Vagina (tissue), 2 donors: ENCODE measurements at regions of chr19 and their contacts with region 1.

Region 1: GRCh38 chr19:19404879-19405860 is at the start of gene GATAD2A:
- DNase-seq: peak in 1 of 2 donors; percentile 94
- H3K4me3 ChIP-seq: peak within 1 kb of the TSS; percentile 87 to 94
- H3K27ac ChIP-seq: peak within 1 kb of the TSS; percentile 83
- H3K4me1 ChIP-seq: peaks cover 59% of the 10 kb centered on the region
- H3K27me3 ChIP-seq: no peaks in the 10 kb centered on the region
- CTCF ChIP-seq: no peak
- POLR2A ChIP-seq: peak in 1 of 2 donors; percentile 50
- total RNA-seq, gene GATAD2A: 49.6 TPM

Region 2: GRCh38 chr19:19444681-19445155 is 39.5 kb after region 1 on chr19:
- intact Hi-C with region 1: loop called (anchors 1 kb)
- DNase-seq: no peak
- H3K4me3 ChIP-seq: no peak overlapping the region
- H3K27ac ChIP-seq: peak overlapping the region; percentile 40
- H3K4me1 ChIP-seq: peaks cover 40% of the 10 kb centered on the region
- H3K27me3 ChIP-seq: no peaks in the 10 kb centered on the region
- CTCF ChIP-seq: no peak
- POLR2A ChIP-seq: no peak

Region 3: DNA sequence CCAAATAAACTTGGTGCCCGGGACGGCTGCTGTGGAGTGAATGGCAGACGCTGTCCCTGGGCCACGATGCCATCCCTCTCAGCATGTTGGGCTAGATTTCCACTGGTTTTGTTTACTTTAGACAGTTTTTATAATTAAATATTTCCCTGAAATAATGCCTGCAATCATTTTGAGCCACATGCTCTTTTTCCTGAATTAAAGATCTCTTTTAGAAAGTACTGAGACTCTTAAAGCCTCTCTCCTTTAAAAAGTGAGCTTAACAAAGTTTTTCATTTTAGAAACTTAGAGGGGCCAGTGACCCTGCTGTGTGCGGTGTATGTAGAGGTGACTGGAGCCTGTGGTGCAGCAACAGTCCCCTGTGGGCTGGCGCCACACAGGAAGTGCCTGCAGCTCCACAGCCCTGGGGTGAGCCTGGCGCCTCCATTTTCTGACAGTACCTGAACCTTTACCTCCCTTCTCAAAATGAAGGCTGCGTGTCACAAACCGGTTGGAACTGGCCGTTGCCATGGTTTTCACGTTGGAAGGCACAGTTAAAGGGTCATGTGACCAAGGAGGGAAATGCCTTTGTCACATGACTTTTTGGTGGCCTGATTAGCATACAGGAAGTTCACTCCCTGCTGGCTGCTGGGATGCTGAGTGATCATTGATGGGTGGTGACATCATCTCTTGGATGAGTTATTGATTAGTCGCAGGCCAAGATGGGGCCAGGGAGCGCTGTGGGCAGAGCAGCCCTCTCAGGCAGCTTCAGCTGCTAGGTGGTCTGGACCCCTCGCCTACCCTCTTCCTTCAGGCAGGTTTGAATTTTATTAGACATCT is 83.9 kb after region 1 on chr19:
- intact Hi-C with region 1: loop called (anchors 10 kb)
- DNase-seq: no peak
- H3K4me3 ChIP-seq: peak overlapping the region; percentile 5 to 19
- H3K27ac ChIP-seq: peak overlapping the region; percentile 75
- H3K4me1 ChIP-seq: peaks cover 57% of the 10 kb centered on the region
- H3K27me3 ChIP-seq: no peaks in the 10 kb centered on the region
- CTCF ChIP-seq: peak in 1 of 3 experiments; percentile 24
- POLR2A ChIP-seq: no peak

Region 4: GRCh38 chr19:19627621-19628500 is 222.7 kb after region 1 on chr19 and contains the start of gene LPAR2:
- intact Hi-C with region 1: no loop called
- DNase-seq: no peak
- H3K4me3 ChIP-seq: peak within 1 kb of the TSS; percentile 45 to 62
- H3K27ac ChIP-seq: peak within 1 kb of the TSS; percentile 62
- H3K4me1 ChIP-seq: peaks cover 15% of the 10 kb centered on the region
- H3K27me3 ChIP-seq: no peaks in the 10 kb centered on the region
- CTCF ChIP-seq: no peak
- POLR2A ChIP-seq: no peak
- total RNA-seq, gene LPAR2: 15.2 TPM